ENCODE measurements at regions of chr7 and their contacts with region 1.

Region 1: GRCh38 chr7:17041324-17041723 is 159.5 kb upstream of the AGR3 start:
- DNase-seq: peak; percentile 94
- H3K4me3 ChIP-seq: peak overlapping the region in 1 of 3 experiments; percentile 30
- H3K27ac ChIP-seq: peak overlapping the region; percentile 88
- H3K4me1 ChIP-seq: peaks cover 52% of the 10 kb centered on the region
- H3K27me3 ChIP-seq: no peaks in the 10 kb centered on the region
- CTCF ChIP-seq: no peak
- POLR2A ChIP-seq: no peak

Region 2: GRCh38 chr7:16940776-16941175 is 100.5 kb before region 1 on chr7:
- CTCF ChIA-PET with region 1: no interaction called
- POLR2A ChIA-PET with region 1: no interaction called
- dilution Hi-C with region 1: no loop called
- intact Hi-C with region 1: loop called (anchors 1 kb)
- DNase-seq: peak; percentile 85
- H3K4me3 ChIP-seq: no peak overlapping the region
- H3K27ac ChIP-seq: peak overlapping the region; percentile 75
- H3K4me1 ChIP-seq: peaks cover 31% of the 10 kb centered on the region
- H3K27me3 ChIP-seq: no peaks in the 10 kb centered on the region
- CTCF ChIP-seq: no peak
- POLR2A ChIP-seq: peak; percentile 70

Region 3: GRCh38 chr7:17009007-17009719 is 32.2 kb before region 1 on chr7:
- CTCF ChIA-PET with region 1: interaction called, 8 read pairs
- POLR2A ChIA-PET with region 1: no interaction called
- dilution Hi-C with region 1: no loop called
- intact Hi-C with region 1: loop called (anchors 2 kb)
- DNase-seq: peak; percentile 43
- H3K4me3 ChIP-seq: no peak overlapping the region
- H3K27ac ChIP-seq: no peak overlapping the region
- H3K4me1 ChIP-seq: peaks cover 3% of the 10 kb centered on the region
- H3K27me3 ChIP-seq: no peaks in the 10 kb centered on the region
- CTCF ChIP-seq: peak in 1 of 2 donors; percentile 21
- POLR2A ChIP-seq: no peak

Region 4: GRCh38 chr7:17234398-17235031 is 193.2 kb after region 1 on chr7:
- CTCF ChIA-PET with region 1: no interaction called
- POLR2A ChIA-PET with region 1: no interaction called
- dilution Hi-C with region 1: no loop called
- intact Hi-C with region 1: loop called (anchors 1 kb)
- DNase-seq: peak; percentile 90
- H3K4me3 ChIP-seq: no peak overlapping the region
- H3K27ac ChIP-seq: peak overlapping the region; percentile 76
- H3K4me1 ChIP-seq: peaks cover 28% of the 10 kb centered on the region
- H3K27me3 ChIP-seq: no peaks in the 10 kb centered on the region
- CTCF ChIP-seq: no peak
- POLR2A ChIP-seq: no peak

Region 5: GRCh38 chr7:17408245-17408903 is 367.1 kb after region 1 on chr7:
- CTCF ChIA-PET with region 1: no interaction called
- POLR2A ChIA-PET with region 1: no interaction called
- dilution Hi-C with region 1: no loop called
- intact Hi-C with region 1: loop called (anchors 10 kb)
- DNase-seq: peak; percentile 80
- H3K4me3 ChIP-seq: no peak overlapping the region
- H3K27ac ChIP-seq: peak overlapping the region; percentile 26
- H3K4me1 ChIP-seq: peaks cover 33% of the 10 kb centered on the region
- H3K27me3 ChIP-seq: no peaks in the 10 kb centered on the region
- CTCF ChIP-seq: no peak
- POLR2A ChIP-seq: no peak

Region 6: GRCh38 chr7:17523813-17524741 is 482.8 kb after region 1 on chr7:
- CTCF ChIA-PET with region 1: interaction called, 3 read pairs
- POLR2A ChIA-PET with region 1: no interaction called
- dilution Hi-C with region 1: no loop called
- intact Hi-C with region 1: loop called (anchors 2 kb)
- DNase-seq: no peak
- H3K4me3 ChIP-seq: no peak overlapping the region
- H3K27ac ChIP-seq: no peak overlapping the region
- H3K4me1 ChIP-seq: peaks cover 22% of the 10 kb centered on the region
- H3K27me3 ChIP-seq: no peaks in the 10 kb centered on the region
- CTCF ChIP-seq: no peak
- POLR2A ChIP-seq: no peak

Measured in endothelial cell of umbilical vein (primary cell).